ENCODE measurements at regions of chr13 and their contacts with region 1.

Region 1: DNA sequence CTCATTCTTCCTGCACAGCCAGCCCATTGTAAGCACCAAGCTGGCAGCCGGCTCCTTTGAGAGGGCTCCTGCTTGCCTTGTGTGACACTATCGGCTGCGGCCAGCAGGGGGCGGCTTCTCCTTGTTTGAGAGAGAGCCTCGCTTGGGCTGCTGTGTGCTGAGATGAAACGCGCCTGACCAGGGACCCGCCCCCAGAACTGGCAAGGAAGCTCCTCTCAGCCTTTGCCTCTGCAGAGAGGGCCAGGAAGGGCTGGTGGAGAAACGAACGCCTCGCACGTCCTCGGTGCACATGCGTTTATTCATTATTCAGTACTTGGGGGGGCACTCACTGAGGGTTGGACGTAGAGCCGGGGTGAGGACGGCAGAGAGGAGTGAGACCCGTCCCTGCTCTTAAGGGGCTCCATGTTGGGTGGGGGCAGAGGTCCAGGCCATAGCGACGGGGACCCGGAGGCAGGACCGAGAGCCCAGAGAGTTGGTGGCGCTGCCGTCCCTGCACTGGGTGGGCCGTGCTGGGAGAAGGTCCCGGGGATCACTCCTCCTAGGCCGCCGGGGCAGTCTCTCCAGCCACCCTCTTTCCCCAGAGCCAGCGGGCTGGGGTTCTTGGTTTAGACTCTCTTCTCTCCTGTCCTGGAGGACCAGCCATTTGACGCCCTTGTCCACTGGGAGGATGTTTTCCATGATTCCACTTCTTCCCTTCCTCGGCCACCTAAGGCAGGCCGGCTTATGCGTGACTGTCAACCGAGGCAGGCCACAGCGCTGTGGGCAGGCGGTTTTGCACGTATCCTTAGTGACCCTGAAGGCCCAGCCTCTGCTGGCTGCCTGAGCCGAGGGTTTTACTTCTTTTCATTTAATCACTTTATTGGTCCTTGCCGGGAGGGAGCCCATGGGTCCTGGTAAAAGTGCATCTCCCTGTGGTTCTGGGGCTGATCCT is 174.5 kb downstream of the KATNAL1 start:
- DNase-seq: peak; percentile 97 to 99 (median 98)
- H3K4me3 ChIP-seq: no peak overlapping the region
- H3K27ac ChIP-seq: no peak overlapping the region
- H3K4me1 ChIP-seq: peaks cover 2% of the 10 kb centered on the region
- H3K27me3 ChIP-seq: no peaks in the 10 kb centered on the region
- CTCF ChIP-seq: peak; percentile 81 to 93 (median 89)
- EP300 ChIP-seq: no peak
- POLR2A ChIP-seq: no peak

Region 2: GRCh38 chr13:30268673-30269072 is 135.8 kb after region 1 on chr13:
- intact Hi-C with region 1: no loop called
- DNase-seq: no peak
- H3K4me3 ChIP-seq: no peak overlapping the region
- H3K27ac ChIP-seq: no peak overlapping the region
- H3K4me1 ChIP-seq: peaks cover 3% of the 10 kb centered on the region
- H3K27me3 ChIP-seq: no peaks in the 10 kb centered on the region
- CTCF ChIP-seq: no peak
- EP300 ChIP-seq: no peak
- POLR2A ChIP-seq: no peak

Region 3: GRCh38 chr13:30453727-30454126 is 320.8 kb after region 1 on chr13:
- intact Hi-C with region 1: loop called in 1 of 4 experiments (anchors 5 kb)
- DNase-seq: no peak
- H3K4me3 ChIP-seq: no peak overlapping the region
- H3K27ac ChIP-seq: no peak overlapping the region
- H3K4me1 ChIP-seq: no peaks in the 10 kb centered on the region
- H3K27me3 ChIP-seq: no peaks in the 10 kb centered on the region
- CTCF ChIP-seq: no peak
- EP300 ChIP-seq: no peak
- POLR2A ChIP-seq: no peak

Region 4: DNA sequence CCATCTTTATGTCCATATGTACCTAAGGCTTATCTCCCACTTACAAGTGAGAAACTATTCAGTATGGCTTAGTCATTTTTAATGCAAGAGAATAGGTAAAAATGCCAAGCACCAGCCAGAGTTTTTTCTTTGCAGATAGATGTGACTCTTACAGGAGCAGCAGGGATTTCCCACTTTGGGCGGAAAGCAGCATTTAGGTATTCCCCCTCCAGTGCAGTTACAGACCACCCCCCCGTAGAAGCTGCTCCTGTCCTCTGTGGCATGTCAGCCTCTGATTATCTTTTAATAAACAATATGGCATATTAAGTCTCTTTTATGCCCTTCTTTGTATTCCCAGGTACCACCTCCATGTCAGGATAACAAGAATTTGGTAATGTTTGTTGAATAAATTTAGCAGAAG is 460.1 kb after region 1 on chr13:
- intact Hi-C with region 1: no loop called
- DNase-seq: no peak
- H3K4me3 ChIP-seq: no peak overlapping the region
- H3K27ac ChIP-seq: no peak overlapping the region
- H3K4me1 ChIP-seq: no peaks in the 10 kb centered on the region
- H3K27me3 ChIP-seq: no peaks in the 10 kb centered on the region
- CTCF ChIP-seq: no peak
- EP300 ChIP-seq: no peak
- POLR2A ChIP-seq: no peak

Region 5: DNA sequence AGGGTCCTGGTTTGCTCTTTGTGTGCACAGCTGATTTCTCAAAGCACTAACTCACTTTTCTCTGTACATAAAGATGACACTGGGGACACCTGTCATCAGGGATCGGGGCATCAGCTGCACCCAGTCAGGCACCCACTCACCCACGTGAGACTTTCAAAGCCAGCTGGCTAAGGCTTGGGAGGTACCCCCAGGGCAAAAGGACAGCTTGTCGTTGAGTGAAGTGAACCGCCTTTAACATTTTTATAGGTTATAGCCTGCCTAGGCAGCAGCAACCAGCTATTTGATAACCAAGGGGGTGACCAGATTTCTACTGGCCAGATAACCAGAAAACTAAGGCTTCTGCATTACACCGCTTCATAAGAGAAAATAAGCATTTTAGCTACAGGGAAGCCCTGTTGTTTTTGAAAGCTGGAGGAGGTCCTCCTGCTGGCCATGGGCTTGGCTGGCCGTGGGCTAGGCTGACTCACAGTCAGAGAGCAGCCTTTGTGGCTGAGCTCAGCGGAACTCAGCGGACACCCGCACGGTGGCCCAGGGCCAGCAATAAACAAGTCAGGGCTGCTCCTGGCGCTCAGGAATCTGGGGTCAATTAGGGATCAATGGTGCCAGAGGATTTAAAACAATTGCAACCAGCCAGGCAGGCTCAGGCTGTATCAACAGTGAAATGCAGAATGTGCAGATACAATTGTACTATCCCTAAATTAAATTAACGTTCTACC is 659.6 kb after region 1 on chr13:
- intact Hi-C with region 1: loop called in 2 of 4 experiments (anchors 5 kb)
- DNase-seq: peak; percentile 75 to 90 (median 81)
- H3K4me3 ChIP-seq: no peak overlapping the region
- H3K27ac ChIP-seq: no peak overlapping the region
- H3K4me1 ChIP-seq: peaks cover 2% of the 10 kb centered on the region
- H3K27me3 ChIP-seq: no peaks in the 10 kb centered on the region
- CTCF ChIP-seq: peak in 2 of 3 donors; percentile 35 to 48
- EP300 ChIP-seq: no peak
- POLR2A ChIP-seq: no peak

Region 6: GRCh38 chr13:30865123-30866049 is 732.5 kb after region 1 on chr13:
- intact Hi-C with region 1: loop called in 1 of 4 experiments (anchors 10 kb)
- DNase-seq: peak; percentile 79 to 86 (median 81)
- H3K4me3 ChIP-seq: no peak overlapping the region
- H3K27ac ChIP-seq: peak overlapping the region; percentile 65 to 81
- H3K4me1 ChIP-seq: peaks cover 23% of the 10 kb centered on the region
- H3K27me3 ChIP-seq: no peaks in the 10 kb centered on the region
- CTCF ChIP-seq: peak; percentile 77 to 92 (median 92)
- EP300 ChIP-seq: no peak
- POLR2A ChIP-seq: peak; percentile 20